ENCODE measurements at regions of chrX and their contacts with region 1.

Region 1: GRCh38 chrX:81121513-81122382 is 80.0 kb downstream of the HMGN5 start:
- DNase-seq: peak; percentile 91
- H3K4me3 Mint-ChIP-seq: peak overlapping the region; percentile 91
- H3K27ac Mint-ChIP-seq: peak overlapping the region; percentile 85
- H3K4me1 Mint-ChIP-seq: peaks cover 3% of the 10 kb centered on the region
- H3K27me3 Mint-ChIP-seq: no peaks in the 10 kb centered on the region

Region 2: DNA sequence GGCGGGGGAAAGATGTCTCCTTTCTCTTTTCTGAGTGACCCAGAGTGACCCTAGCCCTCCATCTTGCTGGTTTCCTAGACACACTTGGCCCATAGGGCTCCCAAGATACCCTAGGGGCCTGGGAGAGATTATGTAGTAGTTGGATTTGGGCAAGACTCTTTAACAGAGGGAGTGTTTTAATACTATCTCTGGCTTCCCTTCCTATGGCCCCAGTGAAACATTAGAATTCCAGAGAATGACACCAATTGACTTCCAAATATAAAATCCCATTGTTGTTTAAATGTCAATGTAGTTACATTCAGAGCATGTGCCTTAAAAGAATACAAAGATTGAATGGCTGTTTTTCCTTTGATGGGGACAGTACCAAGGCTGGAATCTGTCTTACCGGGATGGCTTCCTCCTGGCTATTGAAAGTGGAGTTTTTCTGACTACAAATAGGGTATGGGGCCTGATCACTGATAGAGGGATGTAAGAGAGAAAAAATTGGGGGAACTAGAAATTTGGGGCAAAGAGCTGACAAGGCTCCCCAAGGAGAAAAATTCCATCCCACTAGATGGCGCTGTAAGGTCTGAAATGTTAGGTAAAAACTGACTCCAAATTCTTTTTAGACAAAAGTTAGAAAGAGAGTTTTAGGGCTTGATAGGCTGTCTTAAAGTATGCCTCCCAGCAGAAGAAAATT is 690.8 kb before region 1 on chrX:
- CTCF ChIA-PET with region 1: no interaction called
- intact Hi-C with region 1: no loop called
- DNase-seq: peak; percentile 14
- H3K4me3 Mint-ChIP-seq: no peak overlapping the region
- H3K27ac Mint-ChIP-seq: no peak overlapping the region
- H3K4me1 Mint-ChIP-seq: no peaks in the 10 kb centered on the region
- H3K27me3 Mint-ChIP-seq: no peaks in the 10 kb centered on the region

Region 3: DNA sequence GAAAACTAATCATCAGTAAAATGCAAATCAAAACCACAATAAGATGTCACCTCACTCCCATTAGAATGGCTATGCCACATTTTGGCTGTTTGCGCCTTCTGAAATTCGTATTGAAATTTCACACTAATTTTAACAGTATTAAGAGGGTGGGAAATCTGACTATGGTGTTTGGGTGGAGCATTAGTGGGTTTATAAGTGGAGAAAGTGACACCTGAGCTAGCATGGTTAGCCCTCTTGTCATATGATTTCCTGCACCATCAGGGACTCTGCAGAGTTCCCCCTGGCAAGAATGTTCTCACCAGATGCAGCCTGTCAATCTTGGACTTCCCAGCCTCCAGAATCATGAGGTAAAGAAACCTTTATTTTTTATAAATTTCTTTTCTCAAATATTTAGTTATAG is 280.5 kb before region 1 on chrX:
- CTCF ChIA-PET with region 1: no interaction called
- intact Hi-C with region 1: no loop called
- DNase-seq: no peak
- H3K4me3 Mint-ChIP-seq: no peak overlapping the region
- H3K27ac Mint-ChIP-seq: no peak overlapping the region
- H3K4me1 Mint-ChIP-seq: no peaks in the 10 kb centered on the region
- H3K27me3 Mint-ChIP-seq: no peaks in the 10 kb centered on the region

Region 4: GRCh38 chrX:81201671-81202455 is 80.1 kb after region 1 on chrX and contains the starts of genes HMGN5 and SH3BGRL:
- CTCF ChIA-PET with region 1: interaction called, 5 read pairs
- intact Hi-C with region 1: loop called (anchors 1 kb)
- DNase-seq: peak; percentile 81
- H3K4me3 Mint-ChIP-seq: peak within 1 kb of the TSS; percentile 98
- H3K27ac Mint-ChIP-seq: peak within 1 kb of the TSS; percentile 99
- H3K4me1 Mint-ChIP-seq: peaks cover 39% of the 10 kb centered on the region
- H3K27me3 Mint-ChIP-seq: no peaks in the 10 kb centered on the region
- total RNA-seq, gene HMGN5: 6.2 to 6.3 TPM
- total RNA-seq, gene SH3BGRL: 48.3 to 54.3 TPM

Measured in activated naive CD4-positive, alpha-beta T cell treated with anti-CD3 and anti-CD28 coated beads for 36 hours (primary cell).